ENCODE measurements at regions of chr7 and their contacts with region 1.

Region 1: DNA sequence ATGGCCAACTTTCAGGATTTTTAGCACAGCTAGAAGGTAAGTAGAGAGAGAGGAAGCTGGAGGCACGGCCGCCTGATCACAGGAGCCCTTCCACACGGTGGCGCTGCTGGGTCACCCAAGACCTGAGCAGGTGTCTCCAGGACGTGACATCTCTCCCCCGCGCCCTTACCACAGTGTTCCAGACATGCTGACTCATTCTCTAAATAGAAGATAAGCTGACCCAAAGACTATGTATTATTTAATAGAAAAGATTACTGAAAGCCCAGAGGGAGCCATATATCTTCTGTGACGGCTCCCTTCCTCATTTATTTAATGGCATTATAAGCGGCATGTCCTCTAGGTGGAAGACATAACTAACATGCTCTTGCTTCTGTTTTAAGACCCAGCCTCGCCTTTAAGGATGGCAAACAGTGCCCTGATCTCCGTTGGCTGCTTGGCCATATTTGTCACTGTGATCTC is 26.0 kb upstream of the MALSU1 start:
- DNase-seq: peak; percentile 96
- ATAC-seq: peak; percentile 94
- H3K4me3 ChIP-seq: peak overlapping the region; percentile 29; the same call in 1 of the 2 replicates
- H3K27ac ChIP-seq: peak overlapping the region; percentile 40
- H3K4me1 ChIP-seq: peaks cover 9% of the 10 kb centered on the region
- H3K27me3 ChIP-seq: no peaks in the 10 kb centered on the region
- CTCF ChIP-seq: peak; percentile 90

Region 2: DNA sequence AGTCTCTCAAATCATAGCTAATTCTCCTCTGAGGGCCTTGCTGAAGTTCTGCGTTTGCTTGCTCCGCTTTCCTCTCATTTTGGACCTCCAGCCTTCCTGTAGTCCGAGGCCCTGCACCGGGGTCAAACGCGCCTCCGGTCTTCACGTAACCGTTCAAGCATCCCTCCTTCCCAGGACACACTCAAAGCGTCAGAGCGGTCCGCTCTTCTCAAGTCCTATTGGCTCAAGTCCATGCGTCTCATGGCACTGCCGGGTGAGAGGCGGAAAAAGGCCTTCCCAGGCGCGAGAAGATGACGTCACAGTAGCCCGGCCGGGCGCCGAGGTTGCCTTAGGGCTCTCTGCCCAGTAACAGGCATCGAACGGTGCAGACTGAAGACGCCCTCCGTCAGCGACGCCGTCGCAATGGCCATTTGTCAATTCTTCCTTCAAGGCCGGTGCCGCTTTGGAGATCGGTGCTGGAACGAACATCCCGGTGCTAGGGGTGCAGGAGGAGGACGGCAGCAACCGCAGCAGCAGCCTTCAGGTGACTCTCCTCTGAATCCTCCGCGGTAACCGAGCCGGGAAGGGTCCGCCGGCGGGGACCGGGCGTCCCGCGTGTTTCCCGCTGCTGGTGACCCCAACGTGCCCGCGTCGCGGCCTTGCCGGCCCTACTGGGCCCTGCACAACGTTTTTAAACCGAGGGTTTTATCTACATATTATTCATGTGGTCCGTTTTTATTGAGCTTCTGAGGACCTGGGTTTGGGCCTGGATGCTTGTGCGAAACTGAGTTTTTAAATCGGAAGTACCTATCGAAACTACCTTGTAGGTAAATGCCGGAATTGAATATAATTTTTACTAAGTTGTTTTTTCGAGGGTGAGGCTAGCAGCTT is 91.3 kb before region 1 on chr7 and contains the start of gene NUP42:
- CTCF ChIA-PET with region 1: interaction called, 14 read pairs
- POLR2A ChIA-PET with region 1: no interaction called
- intact Hi-C with region 1: no loop called
- DNase-seq: peak; percentile 99
- ATAC-seq: peak; percentile 91
- H3K4me3 ChIP-seq: peak within 1 kb of the TSS; percentile 88
- H3K27ac ChIP-seq: peak within 1 kb of the TSS; percentile 56
- H3K4me1 ChIP-seq: peaks cover 27% of the 10 kb centered on the region
- H3K27me3 ChIP-seq: no peaks in the 10 kb centered on the region
- CTCF ChIP-seq: no peak
- total RNA-seq, gene NUP42: 30.1 and 48.6 TPM in 2 replicates

Region 3: DNA sequence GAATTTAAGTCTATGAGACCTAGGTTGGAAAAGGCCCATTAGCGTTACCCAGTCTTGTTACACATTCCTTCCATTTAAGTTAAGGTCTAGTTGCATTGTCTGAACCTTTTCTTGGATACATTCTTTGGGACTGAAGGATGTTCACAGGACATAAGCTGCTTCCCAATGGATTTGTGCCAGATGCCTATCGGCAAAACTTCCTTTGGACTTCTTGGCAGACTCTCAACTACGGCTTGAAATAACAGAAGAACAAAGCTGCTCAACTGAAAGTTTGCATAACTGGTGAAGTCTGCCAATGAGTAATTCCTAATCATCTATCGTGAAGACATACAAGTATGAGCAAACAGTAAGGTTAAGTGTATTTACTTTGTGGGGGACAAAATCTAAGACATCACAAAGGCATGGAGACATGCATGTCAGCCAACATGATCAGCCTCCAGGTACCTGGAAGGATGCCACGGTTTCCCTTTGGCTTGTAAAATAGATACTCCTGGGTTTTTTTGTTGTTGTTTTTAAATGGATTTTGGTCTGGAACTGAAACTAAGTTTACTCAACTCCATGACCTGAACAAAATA is 61.4 kb after region 1 on chr7:
- CTCF ChIA-PET with region 1: interaction called, 4 read pairs
- POLR2A ChIA-PET with region 1: no interaction called
- intact Hi-C with region 1: loop called (anchors 1 kb)
- DNase-seq: peak; percentile 99
- ATAC-seq: peak; percentile 76
- H3K4me3 ChIP-seq: peak overlapping the region; percentile 26; the same call in 1 of the 2 replicates
- H3K27ac ChIP-seq: peak overlapping the region; percentile 98
- H3K4me1 ChIP-seq: peaks cover 45% of the 10 kb centered on the region
- H3K27me3 ChIP-seq: no peaks in the 10 kb centered on the region
- CTCF ChIP-seq: no peak

Region 4: GRCh38 chr7:23347682-23348180 is 74.6 kb after region 1 on chr7:
- CTCF ChIA-PET with region 1: interaction called, 9 read pairs
- POLR2A ChIA-PET with region 1: no interaction called
- intact Hi-C with region 1: loop called (anchors 2 kb)
- DNase-seq: peak; percentile 89
- ATAC-seq: peak; percentile 64
- H3K4me3 ChIP-seq: peak overlapping the region; percentile 62
- H3K27ac ChIP-seq: peak overlapping the region; percentile 98
- H3K4me1 ChIP-seq: peaks cover 75% of the 10 kb centered on the region
- H3K27me3 ChIP-seq: no peaks in the 10 kb centered on the region
- CTCF ChIP-seq: no peak

Region 5: GRCh38 chr7:23373151-23374004 is 100.2 kb after region 1 on chr7:
- CTCF ChIA-PET with region 1: no interaction called
- POLR2A ChIA-PET with region 1: no interaction called
- intact Hi-C with region 1: no loop called
- DNase-seq: peak; percentile 17
- ATAC-seq: peak; percentile 39; the same call in 1 of the 2 replicates
- H3K4me3 ChIP-seq: no peak overlapping the region
- H3K27ac ChIP-seq: no peak overlapping the region; the same call in 1 of the 2 replicates
- H3K4me1 ChIP-seq: peaks cover 26% of the 10 kb centered on the region
- H3K27me3 ChIP-seq: no peaks in the 10 kb centered on the region
- CTCF ChIP-seq: no peak

Region 6: DNA sequence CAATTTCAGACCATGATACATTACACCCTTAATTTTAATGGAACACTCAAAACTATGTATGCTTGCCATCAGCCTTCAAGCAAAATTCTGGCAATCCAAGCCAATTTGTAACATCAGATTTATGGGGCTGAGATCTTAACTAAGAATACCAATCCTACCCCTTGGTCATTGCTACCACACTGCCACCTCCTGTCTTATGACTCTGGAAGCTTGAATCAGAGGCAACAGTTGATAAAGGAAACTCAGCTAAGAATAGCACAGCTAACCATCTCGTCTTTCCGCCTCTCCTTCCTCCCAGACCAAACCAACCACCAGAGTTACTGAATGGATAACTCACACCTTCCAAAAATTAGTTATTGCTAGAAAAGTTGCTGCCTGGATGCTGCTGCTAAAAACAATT is 189.7 kb after region 1 on chr7:
- CTCF ChIA-PET with region 1: interaction called, 19 read pairs
- POLR2A ChIA-PET with region 1: no interaction called
- intact Hi-C with region 1: loop called (anchors 1 kb)
- DNase-seq: peak; percentile 61
- ATAC-seq: peak; percentile 71
- H3K4me3 ChIP-seq: no peak overlapping the region
- H3K27ac ChIP-seq: no peak overlapping the region
- H3K4me1 ChIP-seq: peaks cover 40% of the 10 kb centered on the region
- H3K27me3 ChIP-seq: no peaks in the 10 kb centered on the region
- CTCF ChIP-seq: peak; percentile 63

Region 7: GRCh38 chr7:23546897-23547572 is 273.9 kb after region 1 on chr7:
- CTCF ChIA-PET with region 1: interaction called, 24 read pairs
- POLR2A ChIA-PET with region 1: no interaction called
- intact Hi-C with region 1: loop called (anchors 1 kb)
- DNase-seq: peak; percentile 94
- ATAC-seq: peak; percentile 81
- H3K4me3 ChIP-seq: no peak overlapping the region
- H3K27ac ChIP-seq: no peak overlapping the region
- H3K4me1 ChIP-seq: no peaks in the 10 kb centered on the region
- H3K27me3 ChIP-seq: no peaks in the 10 kb centered on the region
- CTCF ChIP-seq: peak; percentile 92

Measured in PC-3 (cell line).